ENCODE measurements at regions of chr1 and their contacts with region 1.

Region 1: GRCh38 chr1:181142096-181142958 is 53.8 kb downstream of the IER5 start:
- DNase-seq: peak; percentile 93
- H3K4me3 Mint-ChIP-seq: peak overlapping the region; percentile 24
- H3K27ac Mint-ChIP-seq: peak overlapping the region; percentile 67
- H3K4me1 Mint-ChIP-seq: peaks cover 46% of the 10 kb centered on the region
- H3K27me3 Mint-ChIP-seq: peaks cover 3% of the 10 kb centered on the region

Region 2: GRCh38 chr1:180515864-180516388 is 626.4 kb before region 1 on chr1:
- CTCF ChIA-PET with region 1: interaction called, 14 read pairs
- POLR2A ChIA-PET with region 1: no interaction called
- intact Hi-C with region 1: no loop called
- DNase-seq: peak; percentile 66
- H3K4me3 Mint-ChIP-seq: no peak overlapping the region
- H3K27ac Mint-ChIP-seq: no peak overlapping the region
- H3K4me1 Mint-ChIP-seq: no peaks in the 10 kb centered on the region
- H3K27me3 Mint-ChIP-seq: peaks cover 5% of the 10 kb centered on the region

Region 3: GRCh38 chr1:180881806-180882509 is 260.4 kb before region 1 on chr1:
- CTCF ChIA-PET with region 1: interaction called, 35 read pairs
- POLR2A ChIA-PET with region 1: no interaction called
- intact Hi-C with region 1: loop called (anchors 1 kb)
- DNase-seq: no peak
- H3K4me3 Mint-ChIP-seq: no peak overlapping the region
- H3K27ac Mint-ChIP-seq: no peak overlapping the region
- H3K4me1 Mint-ChIP-seq: no peaks in the 10 kb centered on the region
- H3K27me3 Mint-ChIP-seq: no peaks in the 10 kb centered on the region

Region 4: DNA sequence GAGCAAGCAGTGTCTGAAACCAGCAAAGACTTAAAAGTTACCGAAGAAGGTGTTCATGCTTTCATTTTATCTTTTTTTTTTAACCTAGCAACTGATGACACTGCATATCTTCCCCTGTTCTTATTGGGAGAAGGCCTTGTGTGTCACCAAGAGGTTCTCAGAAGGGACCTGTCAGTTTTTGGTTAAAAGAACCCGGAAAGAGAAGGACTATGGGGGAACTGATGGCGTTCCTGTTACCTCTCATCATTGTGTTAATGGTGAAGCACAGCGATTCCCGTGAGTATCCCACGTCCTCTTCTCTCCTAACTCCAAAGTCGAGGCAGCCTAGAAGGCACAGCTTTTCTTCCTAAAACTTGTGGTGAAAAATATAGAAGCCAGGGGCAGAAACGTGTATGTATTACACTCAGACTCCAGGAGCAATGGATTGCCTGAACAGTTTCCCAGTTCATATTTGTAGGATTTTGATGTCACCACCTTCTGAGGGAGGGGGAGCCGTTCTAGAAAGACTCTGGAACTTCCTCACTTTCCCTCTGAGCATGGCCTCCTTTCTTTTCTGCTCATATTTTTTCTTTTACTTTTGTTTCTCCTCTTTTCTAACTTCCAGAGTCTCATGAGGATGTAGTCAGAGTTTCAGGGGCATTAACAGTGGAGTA is 108.4 kb before region 1 on chr1 and contains the start of gene MR1:
- CTCF ChIA-PET with region 1: interaction called, 200 read pairs
- POLR2A ChIA-PET with region 1: interaction called, 12 read pairs
- intact Hi-C with region 1: loop called (anchors 1 kb)
- DNase-seq: peak; percentile 37
- H3K4me3 Mint-ChIP-seq: peak within 1 kb of the TSS; percentile 93
- H3K27ac Mint-ChIP-seq: peak within 1 kb of the TSS; percentile 97
- H3K4me1 Mint-ChIP-seq: peaks cover 52% of the 10 kb centered on the region
- H3K27me3 Mint-ChIP-seq: no peaks in the 10 kb centered on the region
- total RNA-seq, gene MR1: 19.5 to 21.2 TPM

Region 5: GRCh38 chr1:181088079-181089016 is 54.0 kb before region 1 on chr1 and contains the start of gene IER5:
- CTCF ChIA-PET with region 1: interaction called, 229 read pairs
- POLR2A ChIA-PET with region 1: interaction called, 91 read pairs
- intact Hi-C with region 1: loop called (anchors 1 kb)
- DNase-seq: peak; percentile 98
- H3K4me3 Mint-ChIP-seq: peak within 1 kb of the TSS; percentile 97
- H3K27ac Mint-ChIP-seq: peak within 1 kb of the TSS; percentile 96
- H3K4me1 Mint-ChIP-seq: peaks cover 39% of the 10 kb centered on the region
- H3K27me3 Mint-ChIP-seq: peaks cover 2% of the 10 kb centered on the region
- total RNA-seq, gene IER5: 27.9 to 28.9 TPM

Region 6: GRCh38 chr1:181152892-181153633 is 10.7 kb after region 1 on chr1:
- CTCF ChIA-PET with region 1: interaction called, 34 read pairs
- POLR2A ChIA-PET with region 1: interaction called, 4 read pairs
- intact Hi-C with region 1: loop called (anchors 1 kb)
- DNase-seq: no peak
- H3K4me3 Mint-ChIP-seq: no peak overlapping the region
- H3K27ac Mint-ChIP-seq: no peak overlapping the region
- H3K4me1 Mint-ChIP-seq: peaks cover 41% of the 10 kb centered on the region
- H3K27me3 Mint-ChIP-seq: no peaks in the 10 kb centered on the region

Region 7: DNA sequence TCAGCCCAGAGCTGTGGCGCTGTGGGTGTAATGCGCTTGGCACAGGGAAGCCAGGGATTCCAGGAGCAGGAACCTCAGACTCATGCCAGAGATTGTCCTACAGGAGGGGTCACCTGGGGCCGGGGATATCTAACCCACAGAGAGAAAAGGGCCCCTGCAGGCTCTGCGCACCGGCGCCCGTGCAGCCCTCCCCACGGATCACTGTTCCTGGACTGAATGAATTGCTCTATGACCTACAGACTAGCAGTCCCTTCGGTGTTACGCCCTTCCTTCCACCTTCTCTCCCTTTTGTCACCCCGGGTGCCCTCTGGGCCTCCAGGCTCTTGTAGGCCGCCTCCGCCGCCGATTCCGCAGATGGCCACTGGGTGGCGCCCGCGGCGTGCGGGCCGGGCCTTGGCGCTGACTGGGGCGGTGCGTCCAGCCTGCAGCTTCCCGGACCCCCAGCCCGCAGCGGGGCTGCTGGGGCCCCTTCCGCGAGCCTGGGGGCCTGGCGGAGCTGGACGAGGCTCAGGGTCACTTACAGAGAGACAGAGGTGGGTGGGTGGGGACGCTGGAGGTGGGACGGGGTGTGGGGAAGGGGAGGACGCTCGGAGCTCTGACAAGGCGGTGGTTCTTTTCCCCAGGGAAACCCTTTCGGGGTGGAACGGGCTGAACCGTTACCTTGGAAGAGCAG is 47.5 kb after region 1 on chr1:
- CTCF ChIA-PET with region 1: no interaction called
- POLR2A ChIA-PET with region 1: no interaction called
- intact Hi-C with region 1: no loop called
- DNase-seq: peak; percentile 81
- H3K4me3 Mint-ChIP-seq: no peak overlapping the region
- H3K27ac Mint-ChIP-seq: no peak overlapping the region
- H3K4me1 Mint-ChIP-seq: peaks cover 2% of the 10 kb centered on the region
- H3K27me3 Mint-ChIP-seq: no peaks in the 10 kb centered on the region

Region 8: GRCh38 chr1:181318022-181318857 is 175.9 kb after region 1 on chr1:
- CTCF ChIA-PET with region 1: no interaction called
- POLR2A ChIA-PET with region 1: no interaction called
- intact Hi-C with region 1: no loop called
- DNase-seq: no peak
- H3K4me3 Mint-ChIP-seq: peak overlapping the region; percentile 64
- H3K27ac Mint-ChIP-seq: no peak overlapping the region
- H3K4me1 Mint-ChIP-seq: peaks cover 22% of the 10 kb centered on the region
- H3K27me3 Mint-ChIP-seq: peaks cover 57% of the 10 kb centered on the region